Esophagus muscularis mucosa (tissue), 4 donors: ENCODE measurements at regions of chr22 and their contacts with region 1.

Region 1: DNA sequence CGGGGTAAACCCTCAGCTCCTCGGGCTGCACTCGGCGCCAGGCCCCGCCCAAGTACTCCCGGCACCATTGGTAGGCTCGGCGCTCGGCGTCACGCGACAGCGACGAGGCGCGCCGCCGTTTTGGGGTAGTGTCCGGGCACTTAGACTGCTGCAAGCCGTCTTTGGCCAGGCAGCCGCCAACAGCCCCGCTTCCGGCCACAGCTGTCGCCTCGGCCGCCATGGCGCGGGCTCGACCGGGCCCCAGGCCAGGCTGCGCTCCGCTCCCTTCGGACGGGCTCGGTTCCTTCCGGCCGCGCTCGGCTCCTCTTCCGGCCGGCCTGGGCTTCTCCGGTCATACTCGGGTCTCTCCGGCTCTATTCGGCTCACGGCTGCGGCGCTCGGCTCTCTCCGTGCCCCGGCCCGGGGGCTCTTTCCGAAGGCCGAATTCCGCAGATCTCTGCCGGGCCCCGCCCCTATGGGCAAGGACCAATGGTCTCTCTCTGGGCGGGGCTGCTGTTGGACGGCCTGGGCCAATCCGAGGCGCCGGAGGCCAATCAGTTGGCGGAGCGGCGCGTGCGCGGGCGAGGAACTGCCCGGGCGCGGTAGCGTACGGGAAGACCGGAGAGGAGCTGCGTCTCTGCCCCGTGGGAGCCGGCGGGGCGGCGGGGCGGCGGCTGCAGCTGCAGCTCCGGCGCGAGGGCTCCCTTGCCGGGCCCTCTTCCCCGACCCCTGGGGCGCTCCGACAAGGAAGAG is at the start of gene CHKB:
- DNase-seq: peak; percentile 99
- H3K4me3 ChIP-seq: peak within 1 kb of the TSS; percentile 69 to 91 (median 82)
- H3K27ac ChIP-seq: peak within 1 kb of the TSS; percentile 93 to 99 (median 97)
- H3K4me1 ChIP-seq: peaks cover 36 to 52% (median 39%) of the 10 kb centered on the region in 4 donors
- H3K27me3 ChIP-seq: peaks cover 0 to 5% (median 0%) of the 10 kb centered on the region in 4 donors
- CTCF ChIP-seq: peak in 1 of 3 experiments; percentile 33
- EP300 ChIP-seq: no peak
- POLR2A ChIP-seq: peak; percentile 89
- total RNA-seq, gene CHKB: 20.7 to 43.5 (median 33.0) TPM

Region 2: DNA sequence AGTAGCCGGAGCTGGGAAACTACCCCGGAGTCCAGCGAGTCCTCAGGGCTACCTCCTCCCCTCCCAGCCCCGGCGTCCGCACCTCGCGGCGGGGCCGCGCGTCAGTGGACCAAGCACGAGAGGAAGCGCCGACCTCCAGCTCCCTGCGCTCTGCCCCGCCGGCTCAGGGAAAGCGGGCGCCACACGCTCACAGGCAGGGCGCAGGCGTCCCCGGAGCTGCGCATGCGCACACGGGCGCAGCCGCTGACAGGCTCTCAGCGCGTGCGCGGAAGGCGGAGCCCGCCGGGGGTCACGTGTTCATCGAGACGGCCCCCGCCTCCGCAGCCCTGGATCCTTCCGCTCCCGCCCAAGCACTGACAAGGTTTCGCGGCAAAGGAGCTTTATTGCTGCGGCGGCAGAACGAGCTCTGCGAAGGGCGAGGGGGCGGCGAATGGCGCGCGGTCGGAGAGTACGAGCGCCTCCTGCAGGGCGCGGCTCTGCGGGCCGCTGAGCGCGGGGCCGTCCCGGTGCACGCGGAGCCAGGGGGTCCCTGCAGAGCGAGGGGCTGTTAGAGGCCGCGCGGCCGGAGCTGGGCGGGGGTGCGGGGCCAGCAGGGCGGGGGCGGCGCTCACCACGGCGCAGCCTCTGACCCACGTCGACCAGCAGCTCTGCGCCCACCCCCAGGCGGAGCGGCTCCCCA is 57.2 kb before region 1 on chr22 and contains the start of gene SCO2:
- intact Hi-C with region 1: loop called (anchors 5 kb)
- DNase-seq: peak; percentile 99
- H3K4me3 ChIP-seq: peak within 1 kb of the TSS; percentile 64 to 75 (median 68)
- H3K27ac ChIP-seq: peak within 1 kb of the TSS; percentile 88 to 93 (median 90)
- H3K4me1 ChIP-seq: peaks cover 24 to 62% (median 53%) of the 10 kb centered on the region in 4 donors
- H3K27me3 ChIP-seq: peaks cover 0 to 15% (median 6%) of the 10 kb centered on the region in 4 donors
- CTCF ChIP-seq: peak; percentile 36 to 54 (median 43)
- EP300 ChIP-seq: no peak
- POLR2A ChIP-seq: peak; percentile 18
- total RNA-seq, gene SCO2: 3.1 to 5.1 TPM in 2 of 4 donors, not detected in the others

Region 3: DNA sequence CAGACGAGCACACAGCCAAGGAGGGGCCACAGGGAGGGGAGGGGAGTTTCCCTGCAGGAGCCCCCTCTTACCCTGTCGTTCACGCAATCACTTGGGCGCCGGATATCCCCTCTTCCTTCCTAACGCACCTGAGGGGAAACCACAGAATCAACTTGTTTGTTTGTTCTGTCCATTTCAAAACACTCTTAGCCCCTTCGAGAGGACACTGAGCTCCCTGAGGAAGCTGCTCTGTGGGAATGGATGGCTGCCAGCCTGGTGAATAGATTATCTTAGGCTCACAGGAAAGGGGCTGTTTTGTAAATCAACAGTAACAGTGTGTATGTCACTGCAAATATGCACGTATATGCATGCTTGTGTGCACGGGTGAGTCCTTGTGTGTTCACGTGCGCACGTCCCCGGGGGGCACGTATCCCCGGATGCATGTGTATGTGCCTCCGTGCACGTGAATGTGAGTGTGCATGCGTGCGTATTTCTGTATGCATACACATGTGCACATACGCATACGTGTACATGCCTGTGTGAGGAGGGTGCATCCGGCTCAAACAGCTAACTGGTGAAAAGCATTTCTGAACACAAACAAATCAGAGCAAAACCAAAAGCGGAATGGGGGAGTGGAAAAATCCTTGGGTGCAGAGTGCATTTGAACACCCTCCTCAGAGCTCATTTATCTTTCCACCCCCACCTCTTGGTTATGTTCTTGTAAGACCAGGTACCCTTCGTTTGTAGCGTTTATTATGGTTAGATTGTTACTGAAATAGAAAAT is 38.0 kb after region 1 on chr22:
- intact Hi-C with region 1: loop called (anchors 5 kb)
- DNase-seq: no peak
- H3K4me3 ChIP-seq: peak overlapping the region; percentile 37 to 50 (median 38)
- H3K27ac ChIP-seq: peak overlapping the region in 1 of 4 donors; percentile 19
- H3K4me1 ChIP-seq: peaks cover 24 to 33% (median 30%) of the 10 kb centered on the region in 4 donors
- H3K27me3 ChIP-seq: peaks cover 0 to 46% (median 4%) of the 10 kb centered on the region in 4 donors
- CTCF ChIP-seq: peak in 2 of 3 experiments; percentile 74 to 80
- EP300 ChIP-seq: no peak
- POLR2A ChIP-seq: no peak

Region 4: DNA sequence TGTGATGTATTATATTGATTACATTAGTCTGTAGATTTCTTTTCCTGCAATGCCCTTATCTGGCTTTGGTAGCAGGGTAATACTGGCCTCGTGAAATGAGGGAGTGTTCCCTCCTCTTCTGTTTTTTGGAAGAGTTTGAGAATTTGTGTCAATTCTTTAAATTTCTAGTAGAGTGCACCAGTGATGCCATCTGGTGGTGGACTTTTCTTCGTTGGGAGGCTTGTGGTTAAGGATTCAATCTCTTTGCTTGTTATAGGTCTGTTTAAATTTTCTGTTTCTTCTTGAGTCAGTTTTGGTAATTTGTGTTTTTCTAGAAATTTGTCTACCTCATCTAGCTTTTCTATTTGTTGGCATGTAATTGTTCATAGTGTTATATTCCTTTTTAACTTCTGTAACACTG is 108.8 kb after region 1 on chr22:
- intact Hi-C with region 1: no loop called
- DNase-seq: no peak
- H3K4me3 ChIP-seq: no peak overlapping the region
- H3K27ac ChIP-seq: no peak overlapping the region
- H3K4me1 ChIP-seq: peaks cover 2 to 13% (median 6%) of the 10 kb centered on the region in 4 donors
- H3K27me3 ChIP-seq: peaks cover 0 to 22% (median 0%) of the 10 kb centered on the region in 4 donors
- CTCF ChIP-seq: peak; percentile 9 to 13 (median 12)
- EP300 ChIP-seq: no peak
- POLR2A ChIP-seq: no peak